ENCODE measurements at regions of chr5 and their contacts with region 1.

Region 1: DNA sequence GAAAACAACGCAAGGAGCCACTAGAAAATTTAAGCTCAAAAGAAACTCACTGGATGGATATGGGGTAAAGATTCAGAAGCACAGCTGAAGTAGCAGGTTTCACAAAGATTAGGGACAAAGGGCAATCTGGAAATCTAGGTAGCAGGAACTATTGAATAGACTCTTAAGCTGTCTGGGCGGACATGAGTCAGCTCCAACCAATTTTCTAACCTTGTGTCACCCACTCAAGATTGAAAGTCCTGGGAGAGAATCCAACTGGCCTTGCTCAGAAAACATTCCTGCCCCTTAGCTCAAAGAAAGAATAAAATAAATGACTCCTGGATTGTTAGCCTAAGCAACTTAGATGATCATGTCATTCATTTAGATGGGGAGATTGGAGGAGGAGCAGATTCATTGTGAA is 69.2 kb downstream of the STK32A start:
- DNase-seq: peak; percentile 88
- ATAC-seq: peak; percentile 92
- H3K4me3 ChIP-seq: peak overlapping the region; percentile 47
- H3K27ac ChIP-seq: peak overlapping the region; percentile 94
- H3K4me1 ChIP-seq: peaks cover 31% of the 10 kb centered on the region
- H3K27me3 ChIP-seq: no peaks in the 10 kb centered on the region
- CTCF ChIP-seq: no peak

Region 2: DNA sequence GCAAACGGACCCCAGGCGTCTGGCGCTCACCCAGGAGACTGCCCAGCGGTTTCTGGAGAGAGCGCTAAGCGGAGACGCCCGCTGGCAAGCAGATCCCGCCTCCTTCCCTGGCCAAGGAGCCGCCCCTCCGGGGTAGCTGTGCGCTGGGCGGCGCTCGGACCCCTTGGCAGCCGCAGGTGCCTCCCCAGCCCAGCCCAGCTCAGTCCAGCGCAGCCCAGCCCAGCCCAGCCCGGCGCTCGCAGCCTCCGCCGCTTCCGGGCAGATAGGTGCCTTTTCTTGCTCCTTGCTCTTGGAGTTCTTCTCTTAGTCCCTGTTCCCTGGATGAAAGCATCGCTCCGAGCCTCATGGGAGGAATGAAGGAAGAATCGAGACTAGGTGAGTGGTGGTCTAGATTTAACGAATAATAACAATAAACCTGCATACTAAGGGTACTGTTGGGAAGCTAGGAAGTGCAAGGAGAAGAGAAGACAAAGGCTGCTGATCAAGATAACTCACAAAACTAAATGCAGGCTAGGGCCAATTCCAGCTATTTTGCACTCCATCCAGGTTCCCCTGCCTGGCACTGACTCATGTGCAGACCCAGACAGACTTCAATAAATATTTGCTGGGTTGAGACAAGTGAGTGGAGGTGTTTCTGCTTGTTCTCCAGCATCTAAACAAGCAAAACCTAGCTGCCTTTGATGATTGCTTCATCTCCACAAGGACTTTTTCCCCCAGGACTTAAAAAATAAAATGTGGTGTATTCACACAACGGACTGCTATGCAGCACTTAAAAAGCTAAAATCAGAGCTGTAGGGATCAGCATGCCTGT is 68.9 kb before region 1 on chr5 and contains the start of gene STK32A:
- CTCF ChIA-PET with region 1: no interaction called
- POLR2A ChIA-PET with region 1: interaction called, 3 read pairs
- intact Hi-C with region 1: loop called (anchors 2 kb)
- DNase-seq: peak; percentile 65
- ATAC-seq: peak; percentile 98
- H3K4me3 ChIP-seq: peak within 1 kb of the TSS; percentile 76
- H3K27ac ChIP-seq: no peak within 1 kb of the TSS
- H3K4me1 ChIP-seq: no peaks in the 10 kb centered on the region
- H3K27me3 ChIP-seq: no peaks in the 10 kb centered on the region
- CTCF ChIP-seq: peak; percentile 28; the same call in 1 of the 2 replicates
- total RNA-seq, gene STK32A: 0.92 and 6.8 TPM in 2 replicates

Region 3: DNA sequence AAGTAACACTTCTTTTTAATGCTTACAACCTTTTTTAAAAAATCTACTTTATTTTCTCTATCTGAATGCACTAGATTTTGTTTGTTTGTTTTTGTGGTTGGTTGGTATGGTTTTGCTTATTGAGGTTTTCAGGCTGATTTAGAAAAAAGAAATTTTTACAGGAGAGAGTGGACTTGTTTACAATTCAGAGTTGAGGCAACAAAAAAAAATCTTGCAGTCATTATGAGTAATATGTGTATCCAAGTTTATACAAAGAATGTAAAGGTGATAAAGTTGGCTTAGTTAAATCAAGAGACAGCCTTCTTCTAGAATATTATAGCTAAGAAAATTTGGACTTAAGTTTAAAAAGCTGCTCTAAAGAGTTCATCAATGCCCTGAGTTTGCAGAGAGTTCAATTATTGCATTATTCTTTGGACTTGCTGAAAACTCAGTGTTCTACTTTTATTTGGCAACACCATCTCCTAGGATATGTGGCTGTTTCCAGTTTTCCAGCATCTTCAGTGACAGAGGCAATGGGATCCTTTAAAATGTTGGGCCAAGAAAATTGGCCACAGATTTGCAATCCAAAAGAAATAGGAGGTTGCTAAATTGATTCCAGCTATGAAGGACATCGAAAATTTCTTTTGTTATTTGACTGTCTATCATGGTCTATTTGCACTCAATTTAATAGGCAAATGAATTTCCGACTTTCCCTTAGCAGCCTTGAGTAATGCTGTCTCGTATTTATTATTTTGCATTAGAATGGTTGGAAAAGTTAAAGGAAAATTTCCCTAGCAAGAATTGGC is 58.4 kb before region 1 on chr5:
- CTCF ChIA-PET with region 1: no interaction called
- POLR2A ChIA-PET with region 1: no interaction called
- intact Hi-C with region 1: loop called (anchors 5 kb)
- DNase-seq: peak; percentile 57
- ATAC-seq: peak; percentile 56
- H3K4me3 ChIP-seq: no peak overlapping the region
- H3K27ac ChIP-seq: no peak overlapping the region
- H3K4me1 ChIP-seq: peaks cover 16% of the 10 kb centered on the region
- H3K27me3 ChIP-seq: no peaks in the 10 kb centered on the region
- CTCF ChIP-seq: no peak

Region 4: GRCh38 chr5:147586832-147587231 is 282.9 kb after region 1 on chr5:
- CTCF ChIA-PET with region 1: no interaction called
- POLR2A ChIA-PET with region 1: no interaction called
- intact Hi-C with region 1: no loop called
- DNase-seq: no peak
- ATAC-seq: no peak
- H3K4me3 ChIP-seq: no peak overlapping the region
- H3K27ac ChIP-seq: no peak overlapping the region
- H3K4me1 ChIP-seq: no peaks in the 10 kb centered on the region
- H3K27me3 ChIP-seq: 0 out of 2 replicates have a peak, but pooled peaks cover 7% of the 10 kb centered on the region
- CTCF ChIP-seq: no peak

Measured in PC-3 (cell line).